ENCODE measurements at regions of chr22 and their contacts with region 1.

Region 1: DNA sequence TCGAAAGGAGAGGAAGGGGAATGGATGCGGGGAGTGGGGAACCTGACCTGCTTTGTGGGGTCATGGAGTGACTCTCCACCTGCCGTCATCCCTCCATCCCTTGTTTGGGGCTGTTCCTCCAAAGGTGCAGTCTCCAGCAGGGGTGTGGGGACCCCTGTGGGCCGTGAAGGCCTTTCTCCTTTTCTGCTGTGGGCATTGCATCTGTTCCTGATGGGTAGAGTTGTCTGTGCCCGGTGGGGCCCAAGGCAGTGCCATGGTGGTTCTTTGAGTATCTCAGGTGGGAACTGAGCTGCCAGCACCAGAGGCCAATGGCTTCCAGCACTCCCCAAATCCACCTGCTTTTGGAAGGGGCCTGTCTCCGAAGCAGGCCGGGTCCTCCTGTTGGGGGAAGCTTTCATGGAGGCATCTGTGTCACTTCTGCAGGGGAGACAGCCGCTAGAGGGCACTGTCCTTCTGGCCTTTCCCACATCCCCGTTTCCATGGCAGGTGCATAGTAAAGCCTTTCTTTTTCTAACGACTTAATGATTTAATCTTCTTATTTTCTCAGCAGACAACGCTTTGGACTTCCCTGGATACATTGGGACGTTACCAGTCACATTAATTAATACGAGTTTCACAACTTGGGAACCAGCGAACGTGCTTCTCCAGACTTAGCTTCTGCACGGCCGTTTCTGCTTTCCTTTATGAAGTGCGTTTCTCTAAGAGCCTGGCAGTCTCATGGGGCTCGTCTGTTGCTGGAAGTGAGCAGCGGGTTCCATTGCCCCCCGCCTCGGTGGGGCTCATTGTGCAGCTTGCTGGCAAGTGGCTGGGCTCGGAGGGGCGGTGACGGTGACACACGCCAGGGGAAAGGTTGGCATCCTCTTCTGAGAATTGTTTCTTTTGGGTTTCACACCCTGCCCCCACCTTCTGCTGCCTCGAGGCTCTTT is 57.1 kb downstream of the PARVB start:
- DNase-seq: peak; percentile 26
- H3K4me3 ChIP-seq: no peak overlapping the region
- H3K27ac ChIP-seq: no peak overlapping the region
- H3K4me1 ChIP-seq: no peaks in the 10 kb centered on the region
- H3K27me3 ChIP-seq: no peaks in the 10 kb centered on the region
- CTCF ChIP-seq: peak; percentile 75 to 95

Region 2: DNA sequence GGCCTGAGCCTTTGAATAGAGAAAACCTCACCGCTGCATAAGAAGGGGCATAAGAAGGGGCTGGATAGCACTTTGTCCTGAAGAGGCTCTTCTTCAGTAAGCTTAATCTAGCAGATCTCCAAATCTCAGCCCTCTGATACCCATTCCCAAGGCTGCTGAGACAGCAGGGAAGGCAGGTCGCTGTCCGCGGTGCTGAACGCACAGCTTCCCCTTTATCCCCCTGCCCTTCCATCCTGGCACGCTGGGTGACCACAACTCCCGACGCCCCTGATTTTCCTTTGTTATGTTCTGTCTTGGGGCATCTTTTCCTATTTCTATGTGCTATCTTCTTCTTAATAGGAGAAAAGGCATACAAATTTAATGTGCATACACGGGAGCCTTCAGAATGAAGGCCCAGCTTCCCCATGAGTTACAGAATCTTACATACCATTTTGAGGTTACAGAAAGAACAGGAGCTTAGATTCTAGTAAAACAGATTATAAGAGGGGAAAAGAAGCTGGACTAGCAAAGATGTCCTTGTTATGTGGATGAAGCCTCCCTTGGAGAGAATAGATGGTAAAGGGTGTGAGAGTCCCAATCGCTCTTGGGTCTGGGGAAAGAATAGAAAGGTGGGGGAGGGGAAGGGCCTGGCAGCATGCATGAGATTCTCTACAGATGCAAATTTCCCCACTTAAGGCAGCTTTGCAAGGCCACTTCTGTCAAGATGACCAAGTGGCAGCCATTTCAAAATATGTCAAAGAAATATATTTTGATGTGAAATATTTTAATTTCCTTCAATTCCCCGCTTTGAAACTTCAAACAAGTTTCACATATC is 213.2 kb before region 1 on chr22:
- CTCF ChIA-PET with region 1: no interaction called
- dilution Hi-C with region 1: no loop called
- in situ Hi-C with region 1: no loop called
- intact Hi-C with region 1: no loop called
- DNase-seq: peak; percentile 39
- H3K4me3 ChIP-seq: no peak overlapping the region
- H3K27ac ChIP-seq: no peak overlapping the region
- H3K4me1 ChIP-seq: no peaks in the 10 kb centered on the region
- H3K27me3 ChIP-seq: no peaks in the 10 kb centered on the region
- CTCF ChIP-seq: no peak

Region 3: GRCh38 chr22:43993027-43993760 is 88.0 kb before region 1 on chr22:
- CTCF ChIA-PET with region 1: interaction called, 31 read pairs
- dilution Hi-C with region 1: loop called (anchors 5 kb)
- in situ Hi-C with region 1: loop called (anchors 10 kb)
- intact Hi-C with region 1: loop called (anchors 1 kb)
- DNase-seq: peak; percentile 11
- H3K4me3 ChIP-seq: no peak overlapping the region
- H3K27ac ChIP-seq: no peak overlapping the region
- H3K4me1 ChIP-seq: no peaks in the 10 kb centered on the region
- H3K27me3 ChIP-seq: no peaks in the 10 kb centered on the region
- CTCF ChIP-seq: peak; percentile 95 to 97

Region 4: DNA sequence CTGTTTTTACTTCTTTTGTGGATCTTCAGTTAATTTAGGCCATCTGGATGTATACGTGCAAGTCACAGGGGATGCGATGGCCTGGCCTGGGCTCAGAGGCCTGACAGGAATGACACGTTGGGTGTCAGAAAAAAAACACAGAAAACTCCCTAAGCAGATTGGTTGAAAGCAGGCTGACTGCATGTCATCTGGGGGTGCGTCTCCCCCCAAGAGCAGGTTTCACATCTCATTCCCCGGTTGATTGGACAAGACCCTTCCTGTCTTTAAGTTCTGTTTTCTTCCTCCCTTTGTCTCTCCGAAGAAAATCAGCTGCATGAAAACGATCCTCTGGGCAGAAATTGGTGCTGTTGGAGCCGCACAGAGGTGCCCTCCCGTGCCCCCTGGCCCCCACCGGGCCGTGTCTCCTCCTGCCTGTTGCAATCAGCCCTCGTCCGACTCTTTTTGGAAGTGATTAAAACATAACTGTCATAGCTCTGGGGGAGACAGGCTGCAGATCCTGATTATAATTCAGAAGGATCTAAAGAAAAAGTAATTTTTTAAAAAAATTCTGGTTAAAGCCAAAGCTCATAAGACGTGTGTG is 27.7 kb after region 1 on chr22:
- CTCF ChIA-PET with region 1: no interaction called
- dilution Hi-C with region 1: no loop called
- in situ Hi-C with region 1: no loop called
- intact Hi-C with region 1: no loop called
- DNase-seq: no peak
- H3K4me3 ChIP-seq: no peak overlapping the region
- H3K27ac ChIP-seq: no peak overlapping the region
- H3K4me1 ChIP-seq: no peaks in the 10 kb centered on the region
- H3K27me3 ChIP-seq: no peaks in the 10 kb centered on the region
- CTCF ChIP-seq: no peak

Region 5: DNA sequence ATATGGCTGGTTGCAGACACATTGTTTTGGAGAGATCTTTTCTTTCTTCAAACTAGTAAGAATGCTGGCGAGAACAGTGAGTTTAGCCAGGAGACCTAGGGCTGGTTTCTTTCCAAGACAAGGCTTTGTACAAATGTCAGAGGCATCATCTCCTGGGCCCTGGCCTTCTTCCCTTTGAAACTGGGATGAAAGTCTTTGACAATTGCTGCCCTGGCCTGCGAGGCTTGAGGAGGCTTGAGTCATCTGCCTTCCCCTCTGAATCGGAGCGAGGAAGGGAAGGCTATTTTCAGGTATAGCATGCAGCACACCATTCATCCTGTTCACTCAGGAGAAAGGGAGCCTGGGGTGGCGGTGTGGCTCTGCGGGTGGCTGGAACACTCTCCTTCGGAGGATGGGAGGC is 78.0 kb after region 1 on chr22:
- CTCF ChIA-PET with region 1: no interaction called
- dilution Hi-C with region 1: loop called (anchors 5 kb)
- in situ Hi-C with region 1: no loop called
- intact Hi-C with region 1: no loop called
- DNase-seq: no peak
- H3K4me3 ChIP-seq: no peak overlapping the region
- H3K27ac ChIP-seq: no peak overlapping the region
- H3K4me1 ChIP-seq: no peaks in the 10 kb centered on the region
- H3K27me3 ChIP-seq: no peaks in the 10 kb centered on the region
- CTCF ChIP-seq: no peak

Region 6: DNA sequence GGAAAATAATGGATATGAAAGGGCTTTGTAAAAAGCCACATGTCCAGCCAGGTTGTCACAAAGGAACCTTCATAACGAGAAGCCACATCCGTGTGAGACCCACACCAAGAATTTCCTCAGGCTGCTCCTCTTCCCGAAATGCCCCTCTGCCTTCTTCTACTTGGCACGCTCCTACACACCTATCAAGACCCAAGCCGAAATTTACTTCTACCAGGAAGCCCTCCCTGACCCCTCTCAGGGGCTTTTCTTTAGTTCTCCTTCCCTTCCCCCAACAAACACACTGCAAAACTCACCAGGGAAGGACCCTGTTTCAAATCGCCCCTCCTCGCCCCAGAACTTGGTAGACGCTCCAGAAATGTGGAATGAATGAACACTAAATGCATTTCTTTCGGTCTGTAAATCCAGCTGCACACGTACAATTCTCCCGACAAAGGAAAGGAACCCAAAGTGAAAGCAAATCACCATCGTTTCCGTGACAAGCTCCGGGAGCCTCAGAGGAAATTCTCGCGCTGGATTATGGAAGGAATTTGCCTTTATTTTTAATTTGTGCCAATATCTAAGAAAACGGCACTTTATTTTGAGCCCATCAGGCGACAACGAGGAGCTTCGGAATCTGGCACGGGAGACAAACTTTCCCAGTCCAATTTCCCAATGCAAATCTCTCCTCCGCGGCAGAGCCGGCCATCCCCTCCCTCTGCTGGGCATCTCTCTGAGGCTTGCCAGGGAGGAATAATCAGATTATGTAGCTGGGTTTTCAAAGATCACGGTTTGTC is 244.7 kb after region 1 on chr22:
- CTCF ChIA-PET with region 1: no interaction called
- dilution Hi-C with region 1: no loop called
- in situ Hi-C with region 1: no loop called
- intact Hi-C with region 1: loop called (anchors 2 kb)
- DNase-seq: peak; percentile 31
- H3K4me3 ChIP-seq: peak overlapping the region; percentile 47 to 68 (median 56)
- H3K27ac ChIP-seq: no peak overlapping the region
- H3K4me1 ChIP-seq: peaks cover 10% of the 10 kb centered on the region
- H3K27me3 ChIP-seq: no peaks in the 10 kb centered on the region
- CTCF ChIP-seq: peak; percentile 10 to 45

Region 7: GRCh38 chr22:44519886-44520285 is 438.7 kb after region 1 on chr22:
- CTCF ChIA-PET with region 1: no interaction called
- dilution Hi-C with region 1: no loop called
- in situ Hi-C with region 1: no loop called
- intact Hi-C with region 1: no loop called
- DNase-seq: no peak
- H3K4me3 ChIP-seq: no peak overlapping the region
- H3K27ac ChIP-seq: no peak overlapping the region
- H3K4me1 ChIP-seq: no peaks in the 10 kb centered on the region
- H3K27me3 ChIP-seq: peaks cover 5% of the 10 kb centered on the region
- CTCF ChIP-seq: no peak

Region 8: DNA sequence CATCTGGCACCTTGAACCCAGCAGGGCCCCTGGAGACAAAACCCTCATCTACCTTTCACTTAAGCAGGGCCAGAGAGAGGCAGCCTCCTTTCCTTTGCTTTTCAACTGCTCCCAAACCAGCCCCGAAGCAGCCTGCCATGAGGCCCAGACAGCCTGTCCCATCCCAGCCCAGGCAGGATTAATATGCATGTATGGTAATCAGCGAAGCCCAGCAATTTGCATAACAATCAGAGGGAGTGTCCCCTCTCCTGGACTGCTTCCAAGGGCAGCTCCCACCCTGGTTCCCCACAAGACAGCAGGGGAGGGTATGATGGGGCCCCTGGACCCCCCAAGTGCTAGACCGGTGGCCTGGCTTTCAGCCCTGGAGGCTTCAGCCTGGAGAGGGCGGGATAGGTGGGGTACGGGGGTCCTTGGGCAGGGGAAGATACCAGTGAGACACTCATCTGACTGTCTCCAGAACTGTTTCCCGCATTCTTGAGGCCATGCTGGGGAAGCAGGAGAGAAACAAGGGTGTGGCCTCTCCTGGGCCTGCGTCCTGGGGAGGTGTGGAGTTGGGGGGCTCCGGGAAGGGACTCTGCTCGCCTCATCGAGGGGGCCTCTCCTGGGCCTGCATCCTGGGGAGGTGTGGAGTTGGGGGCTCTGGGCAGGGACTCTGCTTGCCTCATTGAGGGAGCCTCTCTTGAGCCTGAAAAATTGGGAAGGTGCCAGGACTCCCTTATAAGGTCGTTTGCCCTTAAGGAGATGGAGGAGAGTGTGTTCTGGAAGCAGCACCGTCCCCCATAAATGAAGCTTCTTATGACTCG is 527.6 kb after region 1 on chr22:
- CTCF ChIA-PET with region 1: no interaction called
- dilution Hi-C with region 1: loop called (anchors 10 kb)
- in situ Hi-C with region 1: no loop called
- intact Hi-C with region 1: no loop called
- DNase-seq: no peak
- H3K4me3 ChIP-seq: no peak overlapping the region
- H3K27ac ChIP-seq: no peak overlapping the region
- H3K4me1 ChIP-seq: no peaks in the 10 kb centered on the region
- H3K27me3 ChIP-seq: no peaks in the 10 kb centered on the region
- CTCF ChIP-seq: no peak